Endothelial cell of umbilical vein (primary cell): ENCODE measurements at regions of chr10 and their contacts with region 1.

Region 1: DNA sequence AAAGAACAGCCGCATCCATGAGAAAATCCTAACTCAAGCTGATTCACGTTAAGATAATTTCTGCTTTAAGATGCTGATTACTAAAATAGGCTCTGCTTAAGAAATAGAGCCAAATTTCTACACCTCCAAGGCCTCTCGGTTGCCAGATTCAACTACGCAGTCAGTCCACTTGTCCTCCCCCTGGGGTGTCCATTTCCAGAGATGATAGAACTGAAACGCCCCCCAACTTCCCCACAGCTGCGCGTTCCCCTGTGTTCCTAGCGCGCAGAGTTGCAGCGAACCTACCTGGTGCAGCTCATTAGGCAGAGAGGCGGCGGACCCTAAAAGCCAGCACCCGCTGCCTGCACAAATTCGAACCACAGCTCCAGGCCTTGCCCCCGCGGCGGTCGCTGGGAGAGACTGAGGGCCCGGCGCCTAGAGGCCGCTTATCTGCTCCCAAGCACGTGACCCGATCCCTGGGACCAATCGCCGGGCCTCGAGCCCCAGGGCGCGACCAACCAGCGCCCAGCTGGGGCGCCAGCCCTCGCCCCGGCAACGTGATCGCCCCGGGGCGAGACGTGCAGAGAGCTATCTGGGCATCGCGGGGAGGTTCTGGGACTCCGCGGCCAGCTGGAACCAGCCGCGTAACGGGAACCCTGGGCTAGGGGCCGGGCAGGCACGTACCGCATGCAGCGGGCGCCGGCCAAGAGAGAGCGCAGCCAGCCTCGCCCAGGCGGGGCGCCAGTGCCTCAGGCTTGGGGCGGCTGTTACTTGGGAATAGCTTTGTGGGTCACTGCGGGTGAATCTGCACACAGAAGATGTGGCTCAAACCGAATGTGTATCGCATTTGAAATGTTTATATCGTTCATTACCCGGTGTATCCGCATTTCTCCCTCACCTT is at the start of gene PPP1R3C:
- DNase-seq: peak; percentile 84
- H3K4me3 ChIP-seq: peak within 1 kb of the TSS; percentile 4 to 54 (median 51)
- H3K27ac ChIP-seq: no peak within 1 kb of the TSS
- H3K4me1 ChIP-seq: peaks cover 13% of the 10 kb centered on the region
- H3K27me3 ChIP-seq: peaks cover 2 to 3% of the 10 kb centered on the region in 2 experiments
- CTCF ChIP-seq: peak; percentile 6 to 37
- POLR2A ChIP-seq: peak; percentile 71
- total RNA-seq, gene PPP1R3C: 0.74 and 1.6 TPM in 2 replicates

Region 2: GRCh38 chr10:90885176-90885575 is 747.7 kb before region 1 on chr10:
- CTCF ChIA-PET with region 1: interaction called, 16 read pairs
- POLR2A ChIA-PET with region 1: no interaction called
- dilution Hi-C with region 1: no loop called
- intact Hi-C with region 1: loop called (anchors 1 kb)
- DNase-seq: no peak
- H3K4me3 ChIP-seq: no peak overlapping the region
- H3K27ac ChIP-seq: no peak overlapping the region
- H3K4me1 ChIP-seq: no peaks in the 10 kb centered on the region
- H3K27me3 ChIP-seq: no peaks in the 10 kb centered on the region
- CTCF ChIP-seq: no peak
- POLR2A ChIP-seq: no peak

Region 3: GRCh38 chr10:91409869-91410637 is 222.9 kb before region 1 on chr10 and contains the start of gene HECTD2:
- CTCF ChIA-PET with region 1: interaction called, 5 read pairs
- POLR2A ChIA-PET with region 1: interaction called, 4 read pairs
- dilution Hi-C with region 1: no loop called
- intact Hi-C with region 1: loop called (anchors 1 kb)
- DNase-seq: peak; percentile 72
- H3K4me3 ChIP-seq: peak within 1 kb of the TSS; percentile 54 to 86 (median 80)
- H3K27ac ChIP-seq: peak within 1 kb of the TSS; percentile 96
- H3K4me1 ChIP-seq: peaks cover 9% of the 10 kb centered on the region
- H3K27me3 ChIP-seq: no peaks in the 10 kb centered on the region
- CTCF ChIP-seq: peak; percentile 10 to 21
- POLR2A ChIP-seq: no peak
- total RNA-seq, gene HECTD2: 7.7 and 10.7 TPM in 2 replicates

Region 4: DNA sequence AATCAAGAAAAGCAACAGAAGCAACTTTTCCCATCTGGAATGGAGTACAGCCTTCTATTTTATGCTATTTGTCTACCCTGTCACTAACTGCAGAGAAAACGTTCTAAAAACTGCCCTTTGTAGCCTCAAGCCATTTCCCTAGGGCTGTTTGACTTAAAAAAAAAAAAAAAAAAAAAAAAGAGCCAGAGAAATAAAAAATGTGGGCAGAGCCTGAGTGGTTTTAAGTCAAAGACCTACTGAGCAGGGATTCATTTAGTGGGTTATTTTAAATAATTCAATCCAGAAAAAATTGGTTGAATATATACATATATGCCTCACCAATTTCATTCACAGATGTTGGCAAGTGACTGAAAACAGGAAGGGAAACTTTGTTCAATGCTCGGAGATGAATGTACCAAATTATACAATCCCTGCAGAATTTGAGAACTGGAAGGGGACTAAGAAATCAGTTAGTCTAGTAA is 75.2 kb before region 1 on chr10:
- CTCF ChIA-PET with region 1: interaction called, 226 read pairs
- POLR2A ChIA-PET with region 1: no interaction called
- dilution Hi-C with region 1: no loop called
- intact Hi-C with region 1: loop called (anchors 1 kb)
- DNase-seq: no peak
- H3K4me3 ChIP-seq: no peak overlapping the region
- H3K27ac ChIP-seq: no peak overlapping the region
- H3K4me1 ChIP-seq: no peaks in the 10 kb centered on the region
- H3K27me3 ChIP-seq: peaks cover 0 to 2% of the 10 kb centered on the region in 2 experiments
- CTCF ChIP-seq: no peak
- POLR2A ChIP-seq: no peak

Region 5: DNA sequence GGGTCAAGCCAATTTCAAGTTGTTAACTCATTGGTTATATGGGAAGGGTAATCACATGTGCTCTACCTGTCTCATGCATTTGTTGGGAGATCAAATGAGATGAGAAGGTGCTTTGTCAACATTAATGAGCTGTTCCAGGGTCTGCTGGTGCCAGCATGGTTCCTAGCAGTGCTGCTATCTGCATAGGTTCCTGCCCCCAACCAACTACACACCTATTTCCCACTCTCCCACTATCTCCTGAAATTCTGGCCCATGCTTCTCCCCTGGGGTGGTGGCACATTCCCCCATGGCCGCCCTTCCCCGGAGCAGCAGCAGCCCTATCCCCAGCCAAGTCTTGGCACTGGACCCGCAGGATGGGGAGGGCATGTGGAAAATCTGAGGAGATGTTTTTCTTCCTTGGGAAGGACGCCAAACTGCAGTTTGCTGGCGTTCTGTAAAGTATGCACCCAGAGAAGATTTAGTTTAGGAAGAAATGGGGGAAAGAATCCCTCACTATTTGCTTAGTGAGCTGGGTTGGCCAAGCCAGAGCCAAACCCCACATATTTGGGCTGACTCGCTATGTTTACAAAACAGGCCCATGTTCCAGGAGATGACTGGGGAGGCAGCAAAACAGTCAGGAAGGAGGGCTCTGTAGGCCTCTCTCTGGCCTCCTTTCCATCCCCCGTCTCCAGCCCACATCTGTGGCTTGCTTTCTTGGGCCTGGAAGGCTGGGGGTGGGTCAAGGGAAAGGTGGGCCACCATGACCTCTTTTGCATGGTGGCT is 42.6 kb before region 1 on chr10:
- CTCF ChIA-PET with region 1: interaction called, 18 read pairs
- POLR2A ChIA-PET with region 1: no interaction called
- dilution Hi-C with region 1: no loop called
- intact Hi-C with region 1: loop called (anchors 2 kb)
- DNase-seq: peak; percentile 88
- H3K4me3 ChIP-seq: no peak overlapping the region
- H3K27ac ChIP-seq: no peak overlapping the region
- H3K4me1 ChIP-seq: peaks cover 37% of the 10 kb centered on the region
- H3K27me3 ChIP-seq: peaks cover 0 to 3% of the 10 kb centered on the region in 2 experiments
- CTCF ChIP-seq: no peak
- POLR2A ChIP-seq: no peak

Region 6: DNA sequence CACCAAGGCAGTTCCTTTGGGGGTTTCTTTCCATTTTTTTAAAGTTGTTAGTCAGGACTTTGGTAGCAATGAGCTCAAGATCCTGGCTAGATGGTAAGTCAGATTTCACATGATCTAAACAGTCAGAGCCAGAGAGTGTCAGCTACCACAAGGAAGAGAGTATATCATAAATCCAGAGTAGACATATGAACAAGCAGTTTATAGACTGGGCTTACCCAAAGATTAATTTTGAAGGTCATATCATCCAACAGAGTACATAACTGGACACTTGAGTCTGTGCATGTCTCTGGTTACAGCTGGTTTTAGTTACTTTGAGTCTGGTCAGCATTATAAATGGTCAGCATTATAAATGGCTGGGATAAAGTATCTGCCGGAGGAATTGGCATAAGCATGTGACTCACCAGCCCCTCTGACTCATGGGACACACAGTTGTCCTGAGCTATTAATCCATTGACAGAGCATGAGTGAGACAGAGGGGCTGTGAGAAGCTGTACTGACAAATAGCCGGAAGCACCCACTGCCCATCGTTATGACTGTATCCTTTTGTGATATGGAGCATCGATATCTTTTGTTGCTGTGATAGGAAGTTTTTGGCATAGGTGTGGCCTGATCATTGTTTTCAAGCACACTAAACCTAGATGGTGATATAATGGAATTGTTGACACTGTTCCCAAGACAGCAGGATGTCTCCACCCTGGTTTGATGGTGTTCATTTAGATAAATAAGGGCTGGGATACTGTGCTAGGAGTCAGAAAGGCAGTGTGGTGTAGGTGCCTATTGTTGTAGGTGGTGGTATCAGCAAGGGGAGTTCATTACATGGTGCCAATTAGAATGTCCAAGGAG is 19.3 kb before region 1 on chr10:
- CTCF ChIA-PET with region 1: interaction called, 15 read pairs
- POLR2A ChIA-PET with region 1: no interaction called
- dilution Hi-C with region 1: no loop called
- intact Hi-C with region 1: no loop called
- DNase-seq: peak; percentile 88
- H3K4me3 ChIP-seq: no peak overlapping the region
- H3K27ac ChIP-seq: peak overlapping the region; percentile 57
- H3K4me1 ChIP-seq: peaks cover 20% of the 10 kb centered on the region
- H3K27me3 ChIP-seq: no peaks in the 10 kb centered on the region
- CTCF ChIP-seq: no peak
- POLR2A ChIP-seq: no peak

Region 7: GRCh38 chr10:91694170-91694794 is 61.4 kb after region 1 on chr10:
- CTCF ChIA-PET with region 1: interaction called, 11 read pairs
- POLR2A ChIA-PET with region 1: no interaction called
- dilution Hi-C with region 1: no loop called
- intact Hi-C with region 1: loop called (anchors 2 kb)
- DNase-seq: peak; percentile 48
- H3K4me3 ChIP-seq: no peak overlapping the region
- H3K27ac ChIP-seq: no peak overlapping the region
- H3K4me1 ChIP-seq: no peaks in the 10 kb centered on the region
- H3K27me3 ChIP-seq: peaks cover 3 to 4% of the 10 kb centered on the region in 2 experiments
- CTCF ChIP-seq: peak; percentile 58 to 65
- POLR2A ChIP-seq: no peak